MCF 10A (cell line): ENCODE measurements at regions of chr1 and their contacts with region 1.

Region 1: DNA sequence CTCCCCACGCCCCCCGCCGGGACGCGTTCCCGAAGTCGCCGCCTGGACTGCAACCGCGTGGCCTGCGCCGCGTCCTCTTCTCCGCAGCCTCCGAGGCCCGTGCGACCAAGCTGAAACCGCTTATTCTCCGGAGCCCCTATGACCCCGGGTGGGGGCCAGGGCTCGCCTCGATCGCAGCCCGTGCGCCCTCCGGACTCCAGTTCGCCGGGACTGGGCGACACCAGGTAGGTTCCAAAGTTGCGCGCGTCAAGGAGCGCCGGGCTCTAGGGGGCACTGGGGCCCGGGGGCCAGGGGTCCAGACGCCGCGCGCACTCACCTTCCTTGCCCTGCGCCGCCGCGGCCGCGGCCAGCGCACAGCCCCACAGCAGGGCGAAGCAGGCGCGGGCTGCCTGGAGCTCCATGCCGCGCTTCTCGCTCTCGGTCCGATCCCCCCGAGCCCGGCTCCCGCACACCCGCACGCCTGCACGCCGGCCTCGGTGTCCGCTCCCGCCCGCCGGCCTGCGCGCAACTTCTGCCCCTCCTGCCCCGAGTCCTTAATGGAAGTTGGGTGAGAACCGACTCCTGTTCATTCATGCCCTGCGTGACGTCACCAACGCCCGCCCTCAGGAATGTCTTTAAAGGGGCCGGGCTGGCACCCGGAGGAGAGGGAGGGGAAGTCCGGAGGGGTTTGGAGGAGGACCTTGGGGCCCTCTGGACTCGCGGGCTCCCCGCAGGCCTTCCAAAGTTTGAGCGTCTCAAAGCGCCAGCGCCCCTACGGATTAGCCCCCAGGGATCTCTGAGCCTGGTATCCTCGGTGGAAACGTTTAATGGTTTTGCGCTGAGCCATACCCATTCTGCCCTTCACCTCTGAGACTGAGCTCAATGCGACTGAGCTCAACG is at the start of gene EPHA2:
- DNase-seq: peak; percentile 96
- H3K4me3 Mint-ChIP-seq: peak within 1 kb of the TSS; percentile 87
- H3K27ac Mint-ChIP-seq: peak within 1 kb of the TSS; percentile 63
- H3K4me1 Mint-ChIP-seq: peaks cover 42% of the 10 kb centered on the region
- H3K27me3 Mint-ChIP-seq: no peaks in the 10 kb centered on the region
- CTCF ChIP-seq: no peak
- total RNA-seq, gene EPHA2: 206 and 248 TPM in 2 replicates

Region 2: GRCh38 chr1:16073490-16074119 is 82.2 kb before region 1 on chr1 and contains the start of gene FAM131C:
- CTCF ChIA-PET with region 1: interaction called, 156 read pairs
- POLR2A ChIA-PET with region 1: interaction called, 9 read pairs
- intact Hi-C with region 1: loop called (anchors 1 kb)
- DNase-seq: peak; percentile 27
- H3K4me3 Mint-ChIP-seq: peak within 1 kb of the TSS; percentile 48
- H3K27ac Mint-ChIP-seq: no peak within 1 kb of the TSS
- H3K4me1 Mint-ChIP-seq: peaks cover 37% of the 10 kb centered on the region
- H3K27me3 Mint-ChIP-seq: no peaks in the 10 kb centered on the region
- CTCF ChIP-seq: peak; percentile 50
- total RNA-seq, gene FAM131C: 0.20 TPM in 1 of 2 replicates, not detected in the other

Region 3: GRCh38 chr1:16111771-16112595 is 43.8 kb before region 1 on chr1:
- CTCF ChIA-PET with region 1: no interaction called
- POLR2A ChIA-PET with region 1: no interaction called
- intact Hi-C with region 1: no loop called
- DNase-seq: no peak
- H3K4me3 Mint-ChIP-seq: no peak overlapping the region
- H3K27ac Mint-ChIP-seq: no peak overlapping the region
- H3K4me1 Mint-ChIP-seq: no peaks in the 10 kb centered on the region
- H3K27me3 Mint-ChIP-seq: no peaks in the 10 kb centered on the region
- CTCF ChIP-seq: no peak

Region 4: GRCh38 chr1:16122916-16123315 is 32.9 kb before region 1 on chr1:
- CTCF ChIA-PET with region 1: interaction called, 7 read pairs
- POLR2A ChIA-PET with region 1: interaction called, 17 read pairs
- intact Hi-C with region 1: no loop called
- DNase-seq: peak; percentile 96
- H3K4me3 Mint-ChIP-seq: no peak overlapping the region
- H3K27ac Mint-ChIP-seq: peak overlapping the region; percentile 67
- H3K4me1 Mint-ChIP-seq: peaks cover 32% of the 10 kb centered on the region
- H3K27me3 Mint-ChIP-seq: no peaks in the 10 kb centered on the region
- CTCF ChIP-seq: no peak

Region 5: GRCh38 chr1:16139473-16139962 is 16.3 kb before region 1 on chr1:
- CTCF ChIA-PET with region 1: interaction called, 17 read pairs
- POLR2A ChIA-PET with region 1: interaction called, 112 read pairs
- intact Hi-C with region 1: no loop called
- DNase-seq: peak; percentile 94
- H3K4me3 Mint-ChIP-seq: peak overlapping the region; percentile 26
- H3K27ac Mint-ChIP-seq: peak overlapping the region; percentile 63
- H3K4me1 Mint-ChIP-seq: peaks cover 53% of the 10 kb centered on the region
- H3K27me3 Mint-ChIP-seq: no peaks in the 10 kb centered on the region
- CTCF ChIP-seq: no peak

Region 6: GRCh38 chr1:16181887-16182719 is 26.3 kb after region 1 on chr1:
- CTCF ChIA-PET with region 1: interaction called, 7 read pairs
- POLR2A ChIA-PET with region 1: interaction called, 153 read pairs
- intact Hi-C with region 1: loop called (anchors 1 kb)
- DNase-seq: peak; percentile 91
- H3K4me3 Mint-ChIP-seq: peak overlapping the region; percentile 69
- H3K27ac Mint-ChIP-seq: peak overlapping the region; percentile 98
- H3K4me1 Mint-ChIP-seq: peaks cover 44% of the 10 kb centered on the region
- H3K27me3 Mint-ChIP-seq: no peaks in the 10 kb centered on the region
- CTCF ChIP-seq: no peak

Region 7: DNA sequence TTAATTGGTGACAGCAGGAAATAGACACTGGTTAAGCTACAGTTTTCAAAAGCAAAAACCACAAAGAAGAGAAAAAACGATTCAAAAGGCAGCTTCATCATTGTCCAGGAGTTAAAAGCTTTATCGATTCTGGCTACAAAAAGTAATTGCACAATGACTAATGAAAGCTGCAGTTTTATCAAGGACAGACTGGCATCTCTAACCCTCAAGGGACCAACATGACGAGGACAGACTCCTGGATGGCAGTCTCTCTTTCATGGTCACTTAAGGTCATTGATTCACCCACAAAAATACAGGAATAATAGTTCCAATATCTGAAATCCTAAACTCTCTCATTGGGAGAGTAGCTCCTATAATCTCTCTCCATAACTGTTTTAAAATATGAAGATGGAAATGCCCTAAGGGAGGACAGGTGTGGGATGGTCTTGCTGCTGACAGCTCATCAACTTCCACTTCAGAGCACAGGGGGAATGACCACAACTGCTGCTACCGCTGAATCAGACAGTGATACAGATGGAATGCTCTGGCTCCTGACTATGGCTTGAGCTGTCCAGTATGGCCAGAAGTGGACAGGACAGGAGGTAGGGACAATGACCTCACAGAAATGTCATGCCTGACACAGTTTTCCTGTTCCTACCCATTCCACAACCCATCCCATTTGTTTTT is 98.6 kb after region 1 on chr1:
- CTCF ChIA-PET with region 1: no interaction called
- POLR2A ChIA-PET with region 1: no interaction called
- intact Hi-C with region 1: no loop called
- DNase-seq: no peak
- H3K4me3 Mint-ChIP-seq: no peak overlapping the region
- H3K27ac Mint-ChIP-seq: no peak overlapping the region
- H3K4me1 Mint-ChIP-seq: peaks cover 23% of the 10 kb centered on the region
- H3K27me3 Mint-ChIP-seq: no peaks in the 10 kb centered on the region
- CTCF ChIP-seq: no peak